Right cardiac atrium (tissue), 5 donors: ENCODE measurements at regions of chr16 and their contacts with region 1.

Region 1: GRCh38 chr16:70395345-70395901 is 43.5 kb downstream of the ST3GAL2 start:
- DNase-seq: peak; percentile 70 to 86 (median 83)
- ATAC-seq: peak; percentile 49 to 68
- H3K4me3 ChIP-seq: no peak overlapping the region
- H3K27ac ChIP-seq: no peak overlapping the region
- H3K4me1 ChIP-seq: peaks cover 10% of the 10 kb centered on the region
- H3K27me3 ChIP-seq: no peaks in the 10 kb centered on the region

Region 2: GRCh38 chr16:70470927-70471341 is 75.5 kb after region 1 on chr16:
- intact Hi-C with region 1: loop called in 2 of 4 experiments (anchors 10 kb)
- DNase-seq: peak in 2 of 3 donors; percentile 75 to 78
- ATAC-seq: peak; percentile 38 to 47
- H3K4me3 ChIP-seq: no peak overlapping the region
- H3K27ac ChIP-seq: no peak overlapping the region
- H3K4me1 ChIP-seq: no peaks in the 10 kb centered on the region
- H3K27me3 ChIP-seq: no peaks in the 10 kb centered on the region